Activated CD4-positive, alpha-beta T cell treated with anti-CD3 and anti-CD28 coated beads, Interleukin-2, amount 10 ng/mL, durations not matched to agents 7 days and 5 days (primary cell): ENCODE measurements at regions of chr3 and their contacts with region 1.

Region 1: DNA sequence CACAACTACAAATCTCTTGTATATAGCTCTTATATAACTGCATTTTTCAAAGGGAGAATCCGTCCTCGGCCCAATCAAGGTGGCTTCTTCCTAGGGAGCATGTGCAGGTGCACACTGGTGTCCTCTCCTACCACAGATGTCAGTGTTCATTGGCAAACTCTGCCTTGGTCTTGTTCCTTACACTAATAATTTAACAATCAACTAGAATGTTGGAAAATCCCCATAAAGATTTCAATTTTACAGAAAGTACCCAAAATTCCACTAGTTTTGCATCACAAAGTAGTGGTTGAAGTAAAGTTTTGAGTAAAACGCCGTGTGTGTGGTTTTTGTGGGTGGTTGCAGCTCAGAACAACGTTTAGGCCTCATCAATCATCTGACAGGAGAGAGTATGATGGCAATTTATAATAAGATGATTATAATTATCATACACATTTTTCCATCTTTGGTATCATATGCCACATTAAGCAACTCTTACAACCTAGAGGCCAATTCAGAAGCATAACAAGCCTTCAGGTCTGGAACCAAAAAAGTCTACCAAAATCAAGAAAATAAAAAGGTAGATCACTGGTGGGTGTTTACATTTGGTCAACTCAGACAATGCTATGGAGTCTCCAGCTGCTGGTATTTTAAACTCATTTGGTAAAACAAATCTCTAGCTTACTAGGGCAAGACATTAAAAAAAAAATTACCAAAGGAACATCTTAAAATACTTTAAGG is 128.9 kb upstream of the BHLHE40 start:
- DNase-seq: peak; percentile 61
- H3K4me3 Mint-ChIP-seq: peak overlapping the region; percentile 6
- H3K27ac Mint-ChIP-seq: peak overlapping the region; percentile 84
- H3K4me1 Mint-ChIP-seq: peaks cover 95% of the 10 kb centered on the region
- H3K27me3 Mint-ChIP-seq: no peaks in the 10 kb centered on the region

Region 2: GRCh38 chr3:4834403-4834866 is 15.9 kb before region 1 on chr3:
- CTCF ChIA-PET with region 1: interaction called, 28 read pairs
- POLR2A ChIA-PET with region 1: interaction called, 4 read pairs
- DNase-seq: peak; percentile 78
- H3K4me3 Mint-ChIP-seq: peak overlapping the region; percentile 64
- H3K27ac Mint-ChIP-seq: peak overlapping the region; percentile 94
- H3K4me1 Mint-ChIP-seq: peaks cover 94% of the 10 kb centered on the region
- H3K27me3 Mint-ChIP-seq: no peaks in the 10 kb centered on the region

Region 3: GRCh38 chr3:5071061-5071460 is 220.7 kb after region 1 on chr3:
- CTCF ChIA-PET with region 1: no interaction called
- POLR2A ChIA-PET with region 1: no interaction called
- DNase-seq: no peak
- H3K4me3 Mint-ChIP-seq: no peak overlapping the region
- H3K27ac Mint-ChIP-seq: no peak overlapping the region
- H3K4me1 Mint-ChIP-seq: no peaks in the 10 kb centered on the region
- H3K27me3 Mint-ChIP-seq: peaks cover 13% of the 10 kb centered on the region